AG04449 (cell line): ENCODE measurements at regions of chr1 and their contacts with region 1.

Region 1: DNA sequence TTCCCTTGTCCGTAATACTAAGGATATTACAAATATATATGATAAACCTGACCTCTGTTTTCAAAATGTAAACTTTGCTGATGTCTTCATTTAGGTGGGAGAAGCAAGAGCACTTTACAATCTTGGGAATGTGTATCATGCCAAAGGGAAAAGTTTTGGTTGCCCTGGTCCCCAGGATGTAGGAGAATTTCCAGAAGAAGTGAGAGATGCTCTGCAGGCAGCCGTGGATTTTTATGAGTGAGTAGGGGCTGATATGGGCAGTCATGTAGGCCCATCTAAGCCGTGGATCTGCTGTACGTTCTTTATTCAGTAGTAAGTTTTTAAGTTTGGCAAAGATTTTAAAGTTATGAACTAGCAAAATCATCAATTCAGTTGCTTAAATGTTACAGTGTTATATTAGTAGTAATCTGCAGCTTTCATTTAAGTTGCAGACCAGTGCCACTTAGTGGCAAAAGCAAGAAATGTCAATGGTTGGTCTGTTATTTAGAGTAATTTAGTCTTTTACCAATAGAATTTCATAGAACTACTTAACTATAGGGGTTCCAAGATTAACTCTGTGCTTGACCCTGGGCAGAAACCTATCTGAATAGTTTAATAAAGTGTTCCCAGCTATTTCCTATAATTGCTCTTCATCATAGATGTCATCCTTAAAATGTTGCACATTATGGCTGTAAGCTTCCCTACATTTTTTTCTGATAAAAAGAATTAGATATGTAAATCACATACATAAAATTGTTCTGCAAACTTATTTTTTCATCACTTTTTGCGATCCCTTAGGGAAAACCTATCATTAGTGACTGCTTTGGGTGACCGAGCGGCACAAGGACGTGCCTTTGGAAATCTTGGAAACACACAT is 21.3 kb downstream of the GPSM2 start:
- DNase-seq: peak; percentile 31
- H3K4me3 ChIP-seq: no peak overlapping the region
- CTCF ChIP-seq: peak; percentile 46

Region 2: DNA sequence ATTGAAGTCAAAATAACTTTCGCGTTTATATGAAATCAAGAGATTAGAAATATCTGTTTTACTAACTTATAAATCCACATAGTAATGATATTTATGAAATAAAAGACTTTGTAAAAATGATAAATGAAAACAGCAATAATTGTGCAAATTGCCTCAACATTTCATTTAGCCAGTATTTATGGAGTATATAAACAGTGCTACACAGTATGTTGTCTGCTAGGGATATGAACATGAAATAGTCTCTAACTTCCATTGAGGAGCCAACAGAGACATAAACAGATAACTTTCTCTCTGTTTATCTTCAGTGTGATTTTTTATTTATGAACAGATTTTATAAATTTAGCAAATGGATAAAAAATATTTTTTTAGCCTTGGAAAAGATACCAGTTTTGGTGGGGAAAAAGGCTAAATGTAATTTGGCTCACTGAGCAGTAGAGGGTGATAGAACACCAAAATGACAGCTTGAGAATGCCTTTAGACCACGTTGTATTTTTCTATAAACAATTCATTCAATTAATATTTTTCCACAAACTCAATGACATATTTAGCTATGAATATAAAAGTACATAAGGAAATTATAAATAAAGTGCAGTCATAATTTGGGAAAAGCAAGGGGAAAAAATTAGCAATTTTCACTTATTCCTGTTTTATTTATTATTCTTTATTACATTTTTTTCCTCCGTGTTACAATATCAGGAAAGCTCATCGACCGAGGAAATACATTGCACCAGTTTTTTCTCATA is 385.7 kb before region 1 on chr1:
- CTCF ChIA-PET with region 1: interaction called, 12 read pairs
- POLR2A ChIA-PET with region 1: no interaction called
- DNase-seq: no peak
- H3K4me3 ChIP-seq: no peak overlapping the region
- CTCF ChIP-seq: peak; percentile 63

Region 3: GRCh38 chr1:108780937-108781574 is 117.0 kb before region 1 on chr1:
- CTCF ChIA-PET with region 1: interaction called, 11 read pairs
- POLR2A ChIA-PET with region 1: no interaction called
- DNase-seq: no peak
- H3K4me3 ChIP-seq: no peak overlapping the region
- CTCF ChIP-seq: no peak

Region 4: GRCh38 chr1:108816049-108816893 is 81.8 kb before region 1 on chr1:
- CTCF ChIA-PET with region 1: interaction called, 15 read pairs
- POLR2A ChIA-PET with region 1: no interaction called
- DNase-seq: no peak
- H3K4me3 ChIP-seq: peak overlapping the region; percentile 6; the same call in 1 of the 2 replicates
- CTCF ChIP-seq: no peak

Region 5: DNA sequence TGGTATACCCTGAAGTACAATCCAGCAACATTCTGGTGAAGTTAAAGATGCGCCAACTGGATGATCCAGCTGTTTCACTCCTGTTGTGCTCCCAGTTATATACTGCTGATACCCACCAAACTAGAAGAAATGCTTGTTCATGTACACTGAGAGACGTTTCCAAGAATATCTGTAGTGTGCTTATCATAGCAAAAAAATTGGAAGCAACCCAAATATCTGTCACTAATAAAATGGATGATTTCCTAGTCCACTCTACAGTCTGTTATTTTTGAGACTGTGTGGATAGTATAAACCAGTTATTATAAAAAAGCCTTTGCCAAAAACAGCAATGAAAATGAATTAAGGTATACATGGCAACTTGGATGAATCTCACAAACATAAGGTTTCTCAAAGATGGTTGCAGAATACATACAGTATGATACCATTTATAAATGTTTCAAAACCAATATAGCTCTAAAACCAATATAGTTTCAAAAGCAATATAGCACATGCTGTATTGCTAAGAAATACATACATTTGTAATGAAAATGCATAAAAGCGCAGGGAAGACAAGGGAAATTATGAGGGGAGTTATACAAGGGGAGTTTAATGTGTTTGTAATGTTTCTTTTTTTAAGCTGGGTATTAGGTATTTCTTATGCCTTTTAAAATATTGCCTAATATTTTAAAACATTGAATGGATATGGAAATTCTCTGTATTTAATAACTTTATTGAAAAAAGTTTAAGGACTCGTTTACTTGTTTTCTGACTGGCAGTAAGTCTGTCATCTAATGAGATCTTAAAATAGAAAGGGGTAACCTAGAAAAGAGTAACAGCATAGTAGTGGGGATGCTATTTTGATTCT is 15.2 kb after region 1 on chr1:
- CTCF ChIA-PET with region 1: interaction called, 12 read pairs
- POLR2A ChIA-PET with region 1: no interaction called
- DNase-seq: no peak
- H3K4me3 ChIP-seq: no peak overlapping the region
- CTCF ChIP-seq: no peak